Brain microvascular endothelial cell (primary cell): ENCODE measurements at regions of chr10 and their contacts with region 1.

Region 1: GRCh38 chr10:5396556-5397300 is 7.9 kb downstream of the TUBAL3 start:
- DNase-seq: no peak
- H3K4me3 ChIP-seq: no peak overlapping the region
- H3K27ac ChIP-seq: no peak overlapping the region
- H3K27me3 ChIP-seq: no peaks in the 10 kb centered on the region
- CTCF ChIP-seq: no peak

Region 2: GRCh38 chr10:4849555-4850242 is 547.0 kb before region 1 on chr10:
- in situ Hi-C with region 1: loop called (anchors 25 kb)
- DNase-seq: peak; percentile 96
- H3K4me3 ChIP-seq: no peak overlapping the region
- H3K27ac ChIP-seq: peak overlapping the region; percentile 2
- H3K27me3 ChIP-seq: no peaks in the 10 kb centered on the region
- CTCF ChIP-seq: peak; percentile 100

Region 3: DNA sequence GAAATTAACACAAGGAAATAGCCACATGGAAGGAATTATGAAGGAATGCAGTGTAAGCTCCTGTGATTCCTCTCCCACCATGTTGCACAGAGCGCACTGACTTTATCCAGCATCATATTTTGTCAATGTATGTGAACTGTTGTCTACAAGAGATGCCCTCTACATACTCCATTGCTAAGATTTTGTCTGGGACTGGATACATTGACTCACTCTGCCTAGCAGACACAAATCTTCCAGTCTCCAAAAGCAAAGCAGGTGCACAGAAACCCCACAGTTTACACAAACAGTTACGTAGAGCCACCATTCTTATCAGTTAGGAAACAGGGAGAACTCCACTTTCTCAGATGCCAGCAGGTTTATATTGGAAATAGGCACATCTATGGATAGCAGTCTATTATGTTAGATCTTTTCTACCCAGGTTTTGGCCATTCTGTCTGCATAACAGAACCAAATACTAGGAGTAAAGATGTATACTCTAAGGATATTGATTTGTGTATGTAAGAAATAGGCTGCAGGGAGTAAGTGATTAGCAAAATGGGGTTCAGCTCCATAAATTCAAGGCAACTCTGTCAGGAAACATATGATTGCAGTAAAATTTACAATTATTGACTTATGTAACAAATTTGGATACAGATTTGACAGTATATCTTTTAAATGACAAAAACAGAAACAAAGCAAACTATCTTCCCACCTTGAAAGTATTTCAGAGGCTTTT is 394.6 kb before region 1 on chr10:
- in situ Hi-C with region 1: no loop called
- DNase-seq: no peak
- H3K4me3 ChIP-seq: no peak overlapping the region
- H3K27ac ChIP-seq: no peak overlapping the region
- H3K27me3 ChIP-seq: no peaks in the 10 kb centered on the region
- CTCF ChIP-seq: no peak